ENCODE measurements at regions of chr2 and their contacts with region 1.

Region 1: GRCh38 chr2:170973492-170974303 is 44.6 kb downstream of the GORASP2 start:
- DNase-seq: peak; percentile 92
- H3K4me3 ChIP-seq: peak overlapping the region; percentile 56
- H3K27ac ChIP-seq: peak overlapping the region; percentile 78
- H3K4me1 ChIP-seq: peaks cover 7% of the 10 kb centered on the region
- H3K27me3 ChIP-seq: no peaks in the 10 kb centered on the region
- CTCF ChIP-seq: peak; percentile 84

Region 2: DNA sequence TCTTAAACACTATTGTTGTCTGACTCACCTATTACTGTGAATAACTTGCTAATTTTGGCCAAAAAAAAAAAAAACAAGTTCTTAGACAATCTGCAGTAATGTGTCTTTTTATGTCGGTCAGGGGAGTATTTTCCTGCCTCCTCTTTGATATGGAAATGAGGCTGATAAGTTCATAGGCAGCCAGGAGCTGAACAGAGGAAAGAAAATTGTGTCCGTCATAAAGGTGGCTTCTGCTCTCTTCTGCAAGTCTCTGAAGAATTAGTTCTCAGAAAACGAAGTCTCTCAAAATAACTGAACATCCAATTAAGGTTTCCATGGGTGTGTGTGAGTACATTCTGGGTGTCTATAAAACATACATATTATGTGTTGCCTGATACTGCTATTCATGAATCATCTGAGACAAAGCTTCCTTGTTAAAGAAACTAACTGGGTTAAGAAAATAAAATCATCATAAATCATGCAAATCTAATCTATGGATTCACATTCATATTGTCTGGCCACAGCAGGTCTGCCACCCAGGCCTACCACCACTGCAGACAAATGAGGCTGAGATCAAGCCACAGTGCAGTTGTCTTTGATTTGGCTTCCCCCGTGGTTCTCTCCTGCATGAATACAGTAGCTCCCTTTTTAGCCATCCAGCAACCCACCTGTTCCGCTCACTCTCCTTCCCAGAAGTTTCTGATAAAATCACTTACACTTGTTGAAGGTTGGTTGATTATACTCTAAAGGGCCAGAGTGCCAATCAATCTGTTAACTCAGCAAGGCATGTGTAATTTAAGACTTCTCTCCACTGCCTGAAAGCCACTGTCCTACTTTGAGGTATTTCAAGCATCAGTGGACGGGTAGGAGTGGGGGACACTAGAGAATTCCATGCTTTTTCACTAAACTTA is 277.9 kb before region 1 on chr2:
- CTCF ChIA-PET with region 1: no interaction called
- POLR2A ChIA-PET with region 1: no interaction called
- intact Hi-C with region 1: no loop called
- DNase-seq: no peak
- H3K4me3 ChIP-seq: no peak overlapping the region
- H3K27ac ChIP-seq: no peak overlapping the region
- H3K4me1 ChIP-seq: no peaks in the 10 kb centered on the region
- H3K27me3 ChIP-seq: peaks cover 3% of the 10 kb centered on the region
- CTCF ChIP-seq: no peak

Region 3: DNA sequence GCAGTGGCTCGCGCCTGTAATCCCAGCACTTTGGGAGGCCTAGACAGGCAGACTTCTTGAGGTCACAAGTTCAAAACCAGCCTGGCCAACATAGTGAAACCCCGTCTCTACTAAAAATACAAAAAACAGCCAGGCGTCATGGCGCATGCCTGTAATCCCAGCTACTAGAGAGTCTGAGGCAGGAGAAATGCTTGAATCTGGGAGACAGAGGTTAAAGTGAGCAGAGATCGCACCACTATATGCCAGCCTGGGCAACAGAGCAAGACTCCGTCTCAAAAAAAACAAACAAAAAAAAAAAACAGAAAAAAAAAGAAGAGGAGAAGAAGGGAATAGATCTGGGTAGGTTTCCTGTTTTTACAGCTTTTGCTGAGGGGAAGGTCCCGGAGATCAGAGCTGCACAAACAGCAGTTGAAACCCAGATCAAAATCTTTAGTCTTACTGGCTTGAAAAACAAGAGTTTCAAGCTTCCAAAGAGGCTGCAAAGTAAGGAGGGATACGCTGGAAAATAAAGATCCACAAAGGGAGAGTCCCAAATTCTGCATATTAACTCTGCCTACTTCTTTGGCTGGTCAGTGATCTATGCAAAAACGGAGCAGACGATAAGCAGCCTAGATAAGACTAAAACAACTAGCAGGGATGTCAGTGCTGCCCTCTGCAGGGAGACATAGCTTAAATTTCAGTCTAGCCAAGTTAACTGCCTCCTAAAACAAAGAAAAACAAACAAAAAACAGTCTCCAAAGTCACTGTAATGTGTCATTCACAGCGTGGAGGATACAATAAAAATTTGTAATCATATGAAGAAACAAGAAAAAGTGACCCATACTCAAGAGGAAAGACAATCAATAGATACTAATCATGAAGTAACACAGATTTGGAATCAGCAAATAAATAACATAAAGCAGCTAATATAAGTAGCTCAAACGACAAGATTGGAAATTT is 112.9 kb after region 1 on chr2:
- CTCF ChIA-PET with region 1: interaction called, 4 read pairs
- POLR2A ChIA-PET with region 1: no interaction called
- intact Hi-C with region 1: loop called (anchors 5 kb)
- DNase-seq: peak; percentile 60
- H3K4me3 ChIP-seq: no peak overlapping the region
- H3K27ac ChIP-seq: no peak overlapping the region
- H3K4me1 ChIP-seq: peaks cover 22% of the 10 kb centered on the region
- H3K27me3 ChIP-seq: no peaks in the 10 kb centered on the region
- CTCF ChIP-seq: peak; percentile 84

Region 4: DNA sequence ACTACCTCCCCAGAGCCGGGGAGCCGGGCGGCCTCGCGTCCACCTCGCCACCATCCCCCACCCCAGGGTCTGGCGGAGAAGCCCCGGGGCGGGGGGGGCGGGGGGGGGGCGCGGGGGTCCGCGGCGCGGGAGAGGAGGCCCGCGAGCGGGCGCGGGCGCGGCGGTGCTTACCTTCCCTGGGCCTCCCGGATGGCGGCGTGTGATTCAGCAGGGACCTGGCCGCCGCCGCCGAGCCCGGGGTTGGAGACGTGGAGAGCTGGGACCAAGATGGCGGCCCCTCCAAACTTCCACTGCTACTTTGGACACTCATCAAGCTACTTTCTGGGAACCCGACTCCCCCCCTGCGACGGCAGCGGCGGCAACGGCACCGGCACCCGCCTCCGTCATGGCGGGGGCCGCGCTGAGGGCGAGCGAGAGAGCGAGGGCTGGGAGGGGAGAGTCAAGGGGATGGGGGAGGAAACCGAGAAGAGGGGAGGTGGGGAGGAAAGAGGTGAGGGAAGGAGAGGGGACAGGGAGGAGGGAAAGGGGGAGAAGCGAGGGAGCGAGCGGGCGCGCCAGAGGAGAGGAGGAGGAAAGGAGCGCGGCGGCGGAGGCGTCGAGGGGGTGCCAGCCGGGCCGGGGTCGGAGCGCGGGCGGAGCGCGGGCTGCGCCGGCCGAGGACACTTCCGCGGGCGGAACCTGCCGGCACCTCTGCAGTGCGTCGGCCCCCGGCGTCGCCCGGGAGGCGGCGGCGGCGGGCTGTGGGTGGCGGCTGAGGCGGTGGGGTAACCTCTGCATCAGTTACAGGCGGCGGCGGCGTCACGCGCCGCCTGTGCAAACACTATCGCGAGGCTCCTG is 186.6 kb after region 1 on chr2 and contains the start of gene TLK1:
- CTCF ChIA-PET with region 1: no interaction called
- POLR2A ChIA-PET with region 1: no interaction called
- intact Hi-C with region 1: loop called (anchors 1 kb)
- DNase-seq: peak; percentile 84
- H3K4me3 ChIP-seq: peak within 1 kb of the TSS; percentile 74
- H3K27ac ChIP-seq: peak within 1 kb of the TSS; percentile 99
- H3K4me1 ChIP-seq: peaks cover 59% of the 10 kb centered on the region
- H3K27me3 ChIP-seq: no peaks in the 10 kb centered on the region
- CTCF ChIP-seq: no peak
- total RNA-seq, gene TLK1: 79.1 and 86.8 TPM in 2 replicates

Region 5: GRCh38 chr2:171244970-171245782 is 271.5 kb after region 1 on chr2:
- CTCF ChIA-PET with region 1: no interaction called
- POLR2A ChIA-PET with region 1: no interaction called
- intact Hi-C with region 1: loop called (anchors 10 kb)
- DNase-seq: peak; percentile 10
- H3K4me3 ChIP-seq: no peak overlapping the region
- H3K27ac ChIP-seq: no peak overlapping the region
- H3K4me1 ChIP-seq: no peaks in the 10 kb centered on the region
- H3K27me3 ChIP-seq: no peaks in the 10 kb centered on the region
- CTCF ChIP-seq: no peak

Region 6: DNA sequence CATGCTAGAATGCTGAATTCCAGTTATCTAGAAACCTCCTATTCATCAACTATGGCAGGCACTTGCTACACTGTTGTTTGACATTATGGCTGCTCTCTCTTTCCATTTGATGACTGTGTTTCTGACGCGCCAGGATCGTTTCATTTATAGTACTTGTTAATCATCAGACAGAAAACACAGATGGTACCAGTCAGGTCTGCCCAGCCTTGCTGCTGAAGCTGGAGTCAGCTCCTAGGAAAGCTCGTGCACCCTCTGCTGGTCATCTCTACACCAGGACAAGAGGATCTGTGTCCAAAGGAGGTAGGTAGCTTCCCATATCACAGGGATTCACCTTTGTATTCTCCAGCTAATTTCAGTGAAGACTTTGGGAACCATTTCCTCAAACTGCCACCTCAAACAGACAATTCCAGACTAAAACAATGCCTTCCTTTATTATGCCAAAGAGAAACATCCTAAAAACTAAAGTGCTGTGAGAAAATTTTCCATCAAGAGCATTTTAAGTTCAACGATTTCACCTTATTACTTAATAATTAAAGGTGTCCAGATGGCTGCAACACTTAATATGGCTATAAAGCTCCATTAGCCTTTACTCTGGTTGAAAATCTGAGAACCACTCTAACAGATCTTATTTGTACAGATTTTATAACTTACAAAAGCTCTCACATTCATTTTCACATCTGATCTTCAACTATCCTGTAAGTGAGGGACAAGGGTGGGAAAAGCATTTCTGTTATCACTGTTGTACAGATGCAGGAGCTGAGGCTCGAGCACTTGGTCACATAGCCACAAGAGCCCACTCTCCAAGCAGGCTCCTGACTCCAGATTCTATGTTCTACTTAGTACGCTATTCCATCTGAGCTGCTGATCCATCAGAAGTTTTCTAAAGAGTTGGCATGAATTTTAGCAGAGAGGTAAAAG is 442.6 kb after region 1 on chr2:
- CTCF ChIA-PET with region 1: interaction called, 11 read pairs
- POLR2A ChIA-PET with region 1: no interaction called
- intact Hi-C with region 1: loop called (anchors 1 kb)
- DNase-seq: peak; percentile 93
- H3K4me3 ChIP-seq: no peak overlapping the region
- H3K27ac ChIP-seq: no peak overlapping the region
- H3K4me1 ChIP-seq: peaks cover 14% of the 10 kb centered on the region
- H3K27me3 ChIP-seq: no peaks in the 10 kb centered on the region
- CTCF ChIP-seq: peak; percentile 90

Region 7: GRCh38 chr2:171433763-171434670 is 460.3 kb after region 1 on chr2 and contains the starts of genes DCAF17 and METTL8:
- CTCF ChIA-PET with region 1: no interaction called
- POLR2A ChIA-PET with region 1: no interaction called
- intact Hi-C with region 1: loop called (anchors 5 kb)
- DNase-seq: peak; percentile 98
- H3K4me3 ChIP-seq: peak within 1 kb of the TSS; percentile 80
- H3K27ac ChIP-seq: peak within 1 kb of the TSS; percentile 94
- H3K4me1 ChIP-seq: peaks cover 29% of the 10 kb centered on the region
- H3K27me3 ChIP-seq: no peaks in the 10 kb centered on the region
- CTCF ChIP-seq: peak; percentile 46; the same call in 1 of the 2 replicates
- total RNA-seq, gene DCAF17: 25.0 and 26.1 TPM in 2 replicates
- total RNA-seq, gene METTL8: 29.4 and 33.5 TPM in 2 replicates

Region 8: GRCh38 chr2:171509945-171510731 is 536.4 kb after region 1 on chr2:
- CTCF ChIA-PET with region 1: no interaction called
- POLR2A ChIA-PET with region 1: no interaction called
- intact Hi-C with region 1: no loop called
- DNase-seq: no peak
- H3K4me3 ChIP-seq: no peak overlapping the region
- H3K27ac ChIP-seq: no peak overlapping the region
- H3K4me1 ChIP-seq: no peaks in the 10 kb centered on the region
- H3K27me3 ChIP-seq: no peaks in the 10 kb centered on the region
- CTCF ChIP-seq: no peak

Region 9: GRCh38 chr2:172102391-172103278 is 1128.9 kb after region 1 on chr2 and contains the start of gene DLX2:
- CTCF ChIA-PET with region 1: no interaction called
- POLR2A ChIA-PET with region 1: interaction called, 3 read pairs
- intact Hi-C with region 1: loop called (anchors 10 kb)
- DNase-seq: peak; percentile 98
- H3K4me3 ChIP-seq: peak within 1 kb of the TSS; percentile 81
- H3K27ac ChIP-seq: peak within 1 kb of the TSS; percentile 96
- H3K4me1 ChIP-seq: peaks cover 50% of the 10 kb centered on the region
- H3K27me3 ChIP-seq: no peaks in the 10 kb centered on the region
- CTCF ChIP-seq: peak; percentile 9; the same call in 1 of the 2 replicates
- total RNA-seq, gene DLX2: 18.3 and 20.4 TPM in 2 replicates